HEK293 (cell line): ENCODE measurements at regions of chr22 and their contacts with region 1.

Region 1: DNA sequence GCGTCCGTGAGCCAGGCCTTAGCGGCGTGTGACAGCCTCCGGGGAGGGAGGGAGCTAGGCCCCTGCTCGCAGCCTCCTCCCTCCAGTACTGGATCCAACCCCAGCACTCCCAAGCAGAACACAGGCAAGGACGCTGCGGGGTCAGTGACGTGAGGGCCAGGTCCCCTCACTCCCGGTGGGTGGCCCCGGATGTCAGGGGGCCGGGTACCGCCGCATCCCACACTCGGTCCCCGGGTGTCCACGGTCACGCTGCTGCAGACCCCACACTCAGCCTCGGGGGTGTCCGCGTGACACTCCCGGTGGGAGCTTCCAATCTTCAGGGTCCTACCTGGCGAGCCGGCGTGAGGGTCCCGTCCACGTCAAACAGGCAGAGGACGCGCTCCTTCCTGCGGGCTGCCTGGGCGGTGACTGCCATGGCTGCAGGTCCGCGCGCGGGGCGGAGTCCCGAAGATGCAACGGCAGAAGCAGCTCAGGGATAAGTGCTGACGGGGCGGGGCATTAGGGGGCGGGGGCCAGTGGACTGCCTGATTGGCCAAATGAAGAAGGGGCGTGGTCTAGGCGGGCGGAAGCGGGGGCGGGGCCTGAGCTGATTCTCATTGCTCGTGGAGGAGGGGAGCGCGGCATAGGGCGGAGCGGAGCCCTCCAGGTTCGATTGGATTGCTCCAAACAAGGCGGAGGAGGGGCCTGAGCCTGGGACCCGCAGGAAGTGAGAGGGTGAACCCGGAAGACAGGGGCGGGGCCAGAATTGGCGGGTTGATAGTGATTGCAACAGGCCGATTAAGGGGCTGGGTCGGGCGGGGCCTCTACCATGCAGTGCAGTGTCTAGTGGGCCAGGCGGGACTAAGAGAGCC is at the start of gene PMM1:
- H3K4me3 ChIP-seq: peak within 1 kb of the TSS; percentile 90
- H3K27ac ChIP-seq: peak within 1 kb of the TSS; percentile 61
- H3K4me1 ChIP-seq: peaks cover 12% of the 10 kb centered on the region
- CTCF ChIP-seq: peak; percentile 81; the same call in 1 of the 2 replicates

Region 2: DNA sequence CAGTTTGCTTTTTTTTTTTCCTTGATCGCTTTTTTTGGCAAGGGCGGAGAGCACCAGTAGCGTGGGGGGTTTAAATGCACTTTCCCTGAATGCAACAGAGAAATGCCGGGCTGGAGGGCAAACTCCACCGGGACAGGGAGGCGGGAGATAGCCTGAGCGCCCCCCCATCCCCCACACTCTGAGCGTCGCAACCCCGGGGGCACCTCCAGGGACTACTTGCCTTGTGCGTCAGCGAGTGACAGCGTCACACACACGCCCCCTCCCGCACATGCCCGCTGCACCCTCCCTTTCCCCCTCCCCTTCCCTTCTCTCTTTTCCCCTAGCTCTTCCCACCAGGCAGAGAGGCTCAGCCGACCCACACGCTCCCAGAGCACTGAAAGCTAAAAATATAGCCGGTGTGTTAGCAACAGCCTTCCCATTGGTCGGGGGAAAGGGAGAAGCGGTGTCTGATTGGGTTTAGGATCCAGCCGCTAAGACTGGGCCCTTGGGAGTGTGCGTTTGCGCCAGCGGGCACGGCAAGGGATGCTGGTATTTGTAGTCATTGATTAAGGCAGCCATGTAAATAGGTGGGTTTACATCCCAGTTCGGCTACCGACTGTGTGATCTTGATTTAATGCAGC is 141.3 kb before region 1 on chr22:
- CTCF ChIA-PET with region 1: no interaction called
- POLR2A ChIA-PET with region 1: interaction called, 17 read pairs
- H3K4me3 ChIP-seq: peak overlapping the region; percentile 90
- H3K27ac ChIP-seq: peak overlapping the region; percentile 100
- H3K4me1 ChIP-seq: no peaks in the 10 kb centered on the region
- CTCF ChIP-seq: 0 out of 2 replicates have a peak, but pooled peaks have one; percentile 14

Region 3: GRCh38 chr22:41543854-41544670 is 45.6 kb before region 1 on chr22 and contains the start of gene POLR3H:
- CTCF ChIA-PET with region 1: interaction called, 11 read pairs
- POLR2A ChIA-PET with region 1: interaction called, 22 read pairs
- H3K4me3 ChIP-seq: peak within 1 kb of the TSS; percentile 72
- H3K27ac ChIP-seq: peak within 1 kb of the TSS; percentile 93
- H3K4me1 ChIP-seq: peaks cover 8% of the 10 kb centered on the region
- CTCF ChIP-seq: peak; percentile 88

Region 4: GRCh38 chr22:41568811-41569210 is 20.8 kb before region 1 on chr22:
- CTCF ChIA-PET with region 1: interaction called, 6 read pairs
- POLR2A ChIA-PET with region 1: interaction called, 105 read pairs
- H3K4me3 ChIP-seq: no peak overlapping the region
- H3K27ac ChIP-seq: no peak overlapping the region
- H3K4me1 ChIP-seq: no peaks in the 10 kb centered on the region; the same call in 1 of the 2 replicates
- CTCF ChIP-seq: no peak

Region 5: DNA sequence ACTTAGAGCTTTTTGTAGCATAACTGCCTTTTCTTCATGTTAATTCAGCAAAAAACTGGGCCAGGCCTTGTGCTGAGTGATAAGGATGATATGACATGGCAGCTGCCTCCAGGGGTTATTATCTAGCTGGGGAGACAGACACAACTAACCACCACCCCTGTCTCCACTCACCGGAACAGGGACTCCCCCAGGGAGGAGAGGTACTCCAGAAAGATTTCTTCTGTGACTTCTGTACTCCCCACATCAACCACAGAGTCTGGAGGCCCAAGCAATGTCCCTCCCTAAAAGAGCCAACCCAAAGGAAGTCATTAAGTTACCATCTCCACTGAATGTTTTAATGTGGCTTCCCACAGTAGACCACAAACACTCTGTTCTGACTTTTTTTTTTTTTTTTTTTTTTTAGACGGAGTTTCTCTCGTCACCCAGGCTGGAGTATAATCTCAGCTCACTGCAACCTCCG is 14.3 kb after region 1 on chr22:
- CTCF ChIA-PET with region 1: interaction called, 9 read pairs
- POLR2A ChIA-PET with region 1: interaction called, 16 read pairs
- H3K4me3 ChIP-seq: no peak overlapping the region
- H3K27ac ChIP-seq: no peak overlapping the region
- H3K4me1 ChIP-seq: no peaks in the 10 kb centered on the region
- CTCF ChIP-seq: no peak

Region 6: DNA sequence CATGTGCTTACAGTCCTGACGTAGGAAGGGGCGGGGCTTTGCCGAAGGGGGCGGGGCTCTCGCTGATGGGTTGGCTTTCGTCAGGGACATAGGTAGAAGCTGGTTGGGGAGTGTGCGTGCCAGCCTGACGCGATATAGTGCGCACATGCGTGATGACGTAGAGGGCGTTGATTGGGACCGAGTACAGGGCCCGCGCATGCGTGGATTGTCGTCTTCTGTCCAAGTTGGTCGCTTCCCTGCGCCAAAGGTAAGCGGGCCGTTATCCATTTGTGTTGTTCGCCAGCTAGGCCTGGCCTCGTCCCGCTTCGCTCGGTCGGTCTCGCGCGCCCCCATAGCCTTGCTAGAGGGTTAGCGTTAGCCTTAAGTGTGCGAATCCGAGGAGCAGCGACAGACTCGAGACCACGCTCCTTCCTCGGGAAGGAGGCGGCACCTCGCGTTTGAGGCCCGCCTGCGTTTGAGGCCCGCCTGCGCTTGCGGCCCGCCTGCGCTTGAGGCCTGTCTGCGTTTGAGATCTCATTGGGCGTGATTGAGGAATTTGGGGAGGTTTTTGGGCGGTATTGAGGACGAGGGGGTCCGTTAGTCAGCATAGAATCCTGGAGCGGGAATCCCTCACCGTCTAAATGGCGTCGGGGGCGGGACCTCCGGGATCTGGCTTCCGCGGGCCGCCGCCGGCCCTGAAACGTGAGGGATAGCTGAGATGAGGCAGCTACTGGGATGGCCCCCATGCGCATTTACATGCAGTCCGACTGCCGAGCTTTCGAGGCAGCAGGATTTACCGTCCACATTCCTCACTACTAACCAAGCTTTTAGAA is 31.7 kb after region 1 on chr22 and contains the start of gene XRCC6:
- CTCF ChIA-PET with region 1: no interaction called
- POLR2A ChIA-PET with region 1: interaction called, 75 read pairs
- H3K4me3 ChIP-seq: peak within 1 kb of the TSS; percentile 98
- H3K27ac ChIP-seq: peak within 1 kb of the TSS; percentile 97
- H3K4me1 ChIP-seq: peaks cover 3% of the 10 kb centered on the region; the same call in 1 of the 2 replicates
- CTCF ChIP-seq: no peak

Region 7: GRCh38 chr22:41660416-41660815 is 70.8 kb after region 1 on chr22:
- CTCF ChIA-PET with region 1: no interaction called
- POLR2A ChIA-PET with region 1: no interaction called
- H3K4me3 ChIP-seq: no peak overlapping the region
- H3K27ac ChIP-seq: no peak overlapping the region
- H3K4me1 ChIP-seq: no peaks in the 10 kb centered on the region
- CTCF ChIP-seq: no peak

Region 8: GRCh38 chr22:41781507-41781906 is 191.9 kb after region 1 on chr22:
- CTCF ChIA-PET with region 1: no interaction called
- POLR2A ChIA-PET with region 1: no interaction called
- H3K4me3 ChIP-seq: no peak overlapping the region
- H3K27ac ChIP-seq: no peak overlapping the region
- H3K4me1 ChIP-seq: no peaks in the 10 kb centered on the region
- CTCF ChIP-seq: no peak